Right cardiac atrium (tissue), 5 donors: ENCODE measurements at regions of chr20 and their contacts with region 1.

Region 1: DNA sequence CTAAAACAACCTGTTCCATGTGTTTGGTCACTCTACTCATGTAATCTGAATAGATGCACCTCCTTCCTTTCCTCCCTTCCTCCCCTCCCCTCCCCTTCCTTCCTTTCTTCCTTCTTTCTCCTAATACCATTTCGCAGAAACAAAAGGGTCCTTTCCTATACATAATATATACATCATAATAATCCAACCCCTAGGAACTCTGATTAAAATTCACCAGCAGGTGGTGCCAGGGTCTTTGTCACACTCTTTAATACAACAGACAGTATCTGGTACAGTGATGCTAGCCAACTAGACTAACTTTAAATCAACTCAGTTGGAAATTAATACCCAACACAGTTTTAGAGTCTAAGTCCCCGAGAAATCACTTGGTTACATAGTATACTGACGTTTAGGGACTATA is 181.2 kb upstream of the SHLD1 start:
- DNase-seq: no peak
- ATAC-seq: peak; percentile 54 to 72
- H3K4me3 ChIP-seq: no peak overlapping the region
- H3K27ac ChIP-seq: no peak overlapping the region
- H3K4me1 ChIP-seq: no peaks in the 10 kb centered on the region
- H3K27me3 ChIP-seq: no peaks in the 10 kb centered on the region

Region 2: GRCh38 chr20:5181956-5182355 is 387.1 kb before region 1 on chr20:
- intact Hi-C with region 1: no loop called
- DNase-seq: no peak
- ATAC-seq: peak in 1 of 2 donors; percentile 32
- H3K4me3 ChIP-seq: no peak overlapping the region
- H3K27ac ChIP-seq: no peak overlapping the region
- H3K4me1 ChIP-seq: peaks cover 6% of the 10 kb centered on the region
- H3K27me3 ChIP-seq: no peaks in the 10 kb centered on the region

Region 3: DNA sequence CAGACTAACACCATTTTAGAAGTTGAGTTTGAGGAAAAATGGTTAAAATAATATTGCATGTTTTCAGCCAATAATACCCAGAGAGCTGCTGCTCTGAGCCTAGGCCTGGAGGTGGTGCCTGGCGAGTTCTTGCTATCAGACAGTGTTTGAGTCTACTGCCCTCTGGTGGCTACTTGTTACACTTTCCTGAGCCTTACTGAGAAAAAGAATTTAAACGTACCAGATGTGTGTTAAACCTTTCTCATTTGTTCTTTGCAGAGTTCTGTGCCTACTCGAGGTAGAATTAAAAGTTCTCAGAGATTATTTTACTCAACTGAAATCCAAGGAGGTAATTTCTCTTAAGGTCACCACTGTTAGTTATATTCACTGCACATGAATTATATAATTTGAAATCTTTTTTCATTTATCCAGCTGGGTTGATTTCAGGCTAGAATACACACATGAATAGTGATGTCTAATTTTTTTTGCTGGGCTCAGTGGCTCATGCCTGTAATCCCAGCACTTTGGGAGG is 219.4 kb after region 1 on chr20:
- intact Hi-C with region 1: loop called (anchors 5 to 10 kb)
- DNase-seq: peak; percentile 70 to 89 (median 73)
- ATAC-seq: peak; percentile 91 to 93
- H3K4me3 ChIP-seq: no peak overlapping the region
- H3K27ac ChIP-seq: no peak overlapping the region
- H3K4me1 ChIP-seq: peaks cover 4% of the 10 kb centered on the region
- H3K27me3 ChIP-seq: no peaks in the 10 kb centered on the region

Region 4: GRCh38 chr20:5933802-5934436 is 364.9 kb after region 1 on chr20:
- intact Hi-C with region 1: loop called in 1 of 4 experiments (anchors 10 kb)
- DNase-seq: no peak
- ATAC-seq: peak; percentile 57 to 67
- H3K4me3 ChIP-seq: no peak overlapping the region
- H3K27ac ChIP-seq: no peak overlapping the region
- H3K4me1 ChIP-seq: no peaks in the 10 kb centered on the region
- H3K27me3 ChIP-seq: no peaks in the 10 kb centered on the region